ENCODE measurements at regions of chr1 and their contacts with region 1.

Region 1: DNA sequence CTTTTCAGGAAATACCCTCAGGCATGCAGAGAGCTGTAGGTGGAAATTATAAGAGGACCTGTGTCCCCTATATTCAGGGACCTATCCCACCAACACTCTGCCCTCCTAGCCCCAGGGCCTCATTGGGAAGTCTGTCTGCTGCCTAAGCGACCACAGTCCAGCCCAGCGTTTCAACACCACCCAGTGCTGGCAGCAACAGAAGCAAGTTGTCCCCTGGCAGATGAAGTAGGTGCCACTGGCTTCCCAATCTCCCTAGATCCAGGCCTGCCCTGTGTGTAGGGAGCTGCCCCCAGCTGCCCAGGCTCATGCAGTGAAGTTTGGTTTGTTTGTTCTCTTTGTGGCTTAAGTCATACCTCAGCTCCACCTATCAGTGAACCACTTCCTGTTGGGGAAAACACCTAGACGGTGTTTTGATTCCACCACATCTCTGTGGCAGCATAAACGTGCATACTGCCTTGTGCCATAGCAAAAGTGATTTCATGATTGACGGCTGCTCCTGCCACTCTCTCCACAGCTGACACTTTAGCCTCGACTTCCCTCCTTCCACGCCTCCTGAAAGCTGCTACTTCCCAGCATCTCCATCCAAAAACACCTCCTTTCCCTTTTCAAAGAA is 8.1 kb upstream of the LEFTY1 start:
- DNase-seq: peak; percentile 89
- ATAC-seq: peak; percentile 96
- H3K4me3 Mint-ChIP-seq: peak overlapping the region; percentile 22
- H3K27ac Mint-ChIP-seq: peak overlapping the region; percentile 29
- H3K4me1 Mint-ChIP-seq: peaks cover 29% of the 10 kb centered on the region
- H3K27me3 Mint-ChIP-seq: peaks cover 24% of the 10 kb centered on the region

Region 2: DNA sequence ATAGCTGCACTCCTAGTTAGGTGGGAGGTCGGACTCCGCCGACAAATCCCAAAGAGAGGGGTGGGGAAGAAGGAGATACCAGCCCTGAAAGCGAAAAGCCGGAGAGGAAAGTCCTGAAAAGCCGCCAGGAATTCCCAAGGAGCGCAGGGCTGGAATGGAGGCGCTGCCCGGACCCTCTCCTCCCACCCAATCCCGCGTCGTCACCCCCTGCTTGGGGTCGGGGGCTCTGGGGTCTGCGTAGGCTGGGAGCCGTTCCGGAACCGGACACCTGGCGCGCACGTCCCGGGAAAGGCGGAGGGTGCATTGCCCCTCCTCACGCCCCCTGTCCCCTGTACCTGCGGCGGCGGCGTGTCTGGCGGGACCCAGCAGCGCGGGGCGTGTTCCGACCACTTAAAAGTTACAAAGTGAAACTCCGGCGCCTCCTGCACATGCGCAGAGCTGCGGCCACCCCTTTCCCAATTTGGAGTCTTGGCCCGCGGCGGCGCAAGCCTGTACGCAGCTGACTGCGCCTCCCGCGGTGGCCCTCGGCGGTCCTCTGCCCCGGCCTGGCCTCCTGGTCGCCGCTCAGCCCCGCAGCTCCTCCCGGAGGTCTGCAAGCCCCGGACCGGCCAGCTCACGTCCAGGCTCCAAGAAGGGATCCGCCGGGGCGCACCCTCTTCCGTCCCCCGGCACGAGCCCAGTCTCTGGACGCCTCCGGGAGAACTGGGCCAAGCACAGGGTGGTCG is 14.9 kb before region 1 on chr1 and contains the start of gene TMEM63A:
- CTCF ChIA-PET with region 1: interaction called, 21 read pairs
- DNase-seq: peak; percentile 92
- ATAC-seq: peak; percentile 87
- H3K4me3 Mint-ChIP-seq: peak within 1 kb of the TSS; percentile 82
- H3K27ac Mint-ChIP-seq: peak within 1 kb of the TSS; percentile 87
- H3K4me1 Mint-ChIP-seq: peaks cover 35% of the 10 kb centered on the region
- H3K27me3 Mint-ChIP-seq: peaks cover 5% of the 10 kb centered on the region
- total RNA-seq, gene TMEM63A: 50.4 to 58.7 TPM

Region 3: GRCh38 chr1:225933072-225933471 is 36.0 kb after region 1 on chr1:
- CTCF ChIA-PET with region 1: no interaction called
- DNase-seq: no peak
- ATAC-seq: no peak
- H3K4me3 Mint-ChIP-seq: no peak overlapping the region
- H3K27ac Mint-ChIP-seq: no peak overlapping the region
- H3K4me1 Mint-ChIP-seq: peaks cover 4% of the 10 kb centered on the region
- H3K27me3 Mint-ChIP-seq: no peaks in the 10 kb centered on the region

Measured in activated CD8-positive, alpha-beta memory T cell treated with anti-CD3 and anti-CD28 coated beads, Interleukin-2, amount 10 ng/mL, durations not matched to agents 7 days and 5 days (primary cell).